B cell (primary cell): ENCODE measurements at regions of chr2 and their contacts with region 1.

Region 1: GRCh38 chr2:143162123-143162837 is 33.1 kb downstream of the ARHGAP15 start:
- DNase-seq: peak; percentile 77
- ATAC-seq: peak; percentile 90
- H3K4me3 ChIP-seq: no peak overlapping the region
- H3K4me3 Mint-ChIP-seq: no peak overlapping the region
- H3K27ac ChIP-seq: peak overlapping the region in 1 of 2 donors; percentile 42
- H3K27ac Mint-ChIP-seq: peak overlapping the region; percentile 28
- H3K4me1 ChIP-seq: peaks cover 45 to 56% of the 10 kb centered on the region in 2 donors
- H3K4me1 Mint-ChIP-seq: peaks cover 73% of the 10 kb centered on the region
- H3K27me3 ChIP-seq: no peaks in the 10 kb centered on the region
- H3K27me3 Mint-ChIP-seq: no peaks in the 10 kb centered on the region
- CTCF ChIP-seq: peak; percentile 78

Region 2: GRCh38 chr2:143034292-143035074 is 127.8 kb before region 1 on chr2:
- CTCF ChIA-PET with region 1: interaction called, 9 read pairs
- POLR2A ChIA-PET with region 1: no interaction called
- intact Hi-C with region 1: loop called (anchors 5 kb)
- DNase-seq: peak; percentile 85
- ATAC-seq: peak; percentile 97
- H3K4me3 ChIP-seq: no peak overlapping the region
- H3K4me3 Mint-ChIP-seq: no peak overlapping the region
- H3K27ac ChIP-seq: no peak overlapping the region
- H3K27ac Mint-ChIP-seq: no peak overlapping the region
- H3K4me1 ChIP-seq: peaks cover 10 to 11% of the 10 kb centered on the region in 2 donors
- H3K4me1 Mint-ChIP-seq: peaks cover 9% of the 10 kb centered on the region
- H3K27me3 ChIP-seq: no peaks in the 10 kb centered on the region
- H3K27me3 Mint-ChIP-seq: no peaks in the 10 kb centered on the region
- CTCF ChIP-seq: peak; percentile 99

Region 3: DNA sequence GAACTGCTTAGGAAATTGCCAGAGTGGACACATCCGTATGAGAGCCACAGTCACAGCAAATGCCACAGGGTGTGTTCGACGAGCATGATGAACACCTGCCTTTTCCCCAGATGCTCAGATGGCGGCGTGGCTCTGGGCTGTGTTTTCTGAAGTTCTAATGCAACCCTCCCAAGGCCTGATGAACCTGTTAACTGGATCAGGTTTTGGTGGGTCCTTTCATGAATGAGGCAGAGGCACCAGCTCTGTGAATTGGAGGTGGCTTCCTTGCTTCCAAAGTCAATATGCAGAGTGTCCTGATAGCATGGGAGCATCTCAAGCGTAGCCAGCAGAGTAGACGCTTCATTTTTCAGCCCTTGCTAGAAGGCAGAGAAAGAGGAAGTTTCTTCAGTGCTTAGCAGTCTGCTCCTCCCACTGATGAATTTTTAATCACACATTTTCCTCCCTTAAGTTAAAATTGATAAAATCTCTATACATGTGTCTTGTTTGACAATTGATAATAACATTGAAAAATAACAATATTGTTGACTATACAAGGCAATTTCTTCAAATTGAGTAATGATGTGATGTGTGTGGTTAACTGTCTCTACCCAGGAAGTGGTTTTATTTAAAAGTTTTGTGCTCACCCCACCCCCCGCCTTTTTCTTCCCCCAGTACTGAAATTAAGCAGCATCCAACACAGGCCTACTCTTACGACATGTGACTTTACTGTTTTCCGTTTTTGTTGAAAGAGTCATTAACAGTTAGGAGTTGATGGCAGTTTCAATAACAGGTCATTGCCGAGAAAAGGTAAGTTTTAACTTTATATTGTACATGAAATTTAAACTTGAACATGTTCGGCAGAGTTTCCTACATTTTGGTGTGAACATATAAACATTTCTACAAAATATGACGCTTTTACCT is 33.3 kb before region 1 on chr2 and contains the start of gene ARHGAP15:
- CTCF ChIA-PET with region 1: interaction called, 130 read pairs
- POLR2A ChIA-PET with region 1: interaction called, 3 read pairs
- intact Hi-C with region 1: loop called (anchors 2 kb)
- DNase-seq: peak; percentile 90
- ATAC-seq: peak; percentile 92
- H3K4me3 ChIP-seq: peak within 1 kb of the TSS; percentile 44 to 93 (median 57)
- H3K4me3 Mint-ChIP-seq: peak within 1 kb of the TSS; percentile 78
- H3K27ac ChIP-seq: peak within 1 kb of the TSS; percentile 92
- H3K27ac Mint-ChIP-seq: peak within 1 kb of the TSS; percentile 99
- H3K4me1 ChIP-seq: peaks cover 46 to 51% of the 10 kb centered on the region in 2 donors
- H3K4me1 Mint-ChIP-seq: peaks cover 52% of the 10 kb centered on the region
- H3K27me3 ChIP-seq: no peaks in the 10 kb centered on the region
- H3K27me3 Mint-ChIP-seq: no peaks in the 10 kb centered on the region
- CTCF ChIP-seq: no peak
- total RNA-seq, gene ARHGAP15: 187 and 198 TPM in 2 replicates

Region 4: GRCh38 chr2:143177096-143177786 is 15.0 kb after region 1 on chr2:
- CTCF ChIA-PET with region 1: interaction called, 68 read pairs
- POLR2A ChIA-PET with region 1: no interaction called
- intact Hi-C with region 1: loop called (anchors 2 kb)
- DNase-seq: peak; percentile 74
- ATAC-seq: peak; percentile 95
- H3K4me3 ChIP-seq: peak overlapping the region in 3 of 5 experiments; percentile 29 to 57 (median 38)
- H3K4me3 Mint-ChIP-seq: peak overlapping the region; percentile 87
- H3K27ac ChIP-seq: peak overlapping the region; percentile 88 to 90
- H3K27ac Mint-ChIP-seq: peak overlapping the region; percentile 96
- H3K4me1 ChIP-seq: peaks cover 34 to 38% of the 10 kb centered on the region in 2 donors
- H3K4me1 Mint-ChIP-seq: peaks cover 61% of the 10 kb centered on the region
- H3K27me3 ChIP-seq: no peaks in the 10 kb centered on the region
- H3K27me3 Mint-ChIP-seq: no peaks in the 10 kb centered on the region
- CTCF ChIP-seq: no peak

Region 5: DNA sequence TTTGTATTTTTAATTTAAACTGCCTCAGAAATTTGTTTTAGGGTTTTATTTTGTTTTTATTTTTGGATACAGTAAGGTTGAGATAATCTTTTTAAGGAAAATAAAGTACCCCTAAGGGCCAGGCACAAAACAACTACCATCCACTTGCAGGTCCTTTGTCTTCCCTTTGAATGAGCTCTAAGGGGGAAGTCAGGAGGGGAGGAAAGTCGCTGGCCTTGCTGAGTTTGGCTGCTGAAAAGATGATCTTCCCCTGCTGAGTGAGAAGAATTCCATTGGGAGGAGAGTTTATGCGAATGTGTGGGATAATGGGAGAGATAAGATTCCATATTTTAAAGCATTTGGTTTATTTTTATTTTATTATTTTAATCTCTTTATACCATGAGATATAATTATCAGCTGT is 67.7 kb after region 1 on chr2:
- CTCF ChIA-PET with region 1: interaction called, 127 read pairs
- POLR2A ChIA-PET with region 1: no interaction called
- intact Hi-C with region 1: no loop called
- DNase-seq: no peak
- ATAC-seq: no peak
- H3K4me3 ChIP-seq: no peak overlapping the region
- H3K4me3 Mint-ChIP-seq: no peak overlapping the region
- H3K27ac ChIP-seq: no peak overlapping the region
- H3K27ac Mint-ChIP-seq: no peak overlapping the region
- H3K4me1 ChIP-seq: no peaks in the 10 kb centered on the region
- H3K4me1 Mint-ChIP-seq: peaks cover 13% of the 10 kb centered on the region
- H3K27me3 ChIP-seq: no peaks in the 10 kb centered on the region
- H3K27me3 Mint-ChIP-seq: no peaks in the 10 kb centered on the region
- CTCF ChIP-seq: no peak

Region 6: GRCh38 chr2:143284087-143284675 is 121.9 kb after region 1 on chr2:
- CTCF ChIA-PET with region 1: interaction called, 7 read pairs
- POLR2A ChIA-PET with region 1: no interaction called
- intact Hi-C with region 1: loop called (anchors 1 kb)
- DNase-seq: peak; percentile 62
- ATAC-seq: peak; percentile 80
- H3K4me3 ChIP-seq: no peak overlapping the region
- H3K4me3 Mint-ChIP-seq: no peak overlapping the region
- H3K27ac ChIP-seq: no peak overlapping the region
- H3K27ac Mint-ChIP-seq: no peak overlapping the region
- H3K4me1 ChIP-seq: no peaks in the 10 kb centered on the region
- H3K4me1 Mint-ChIP-seq: peaks cover 16% of the 10 kb centered on the region
- H3K27me3 ChIP-seq: no peaks in the 10 kb centered on the region
- H3K27me3 Mint-ChIP-seq: no peaks in the 10 kb centered on the region
- CTCF ChIP-seq: peak; percentile 93